Dendritic cell treated with granulocyte-macrophage colony-stimulating factor and Interleukin-4, amounts not matched to agents 40 ng/mL and 50 ng/mL, for 4 days (primary cell): ENCODE measurements at regions of chr4 and their contacts with region 1.

Region 1: DNA sequence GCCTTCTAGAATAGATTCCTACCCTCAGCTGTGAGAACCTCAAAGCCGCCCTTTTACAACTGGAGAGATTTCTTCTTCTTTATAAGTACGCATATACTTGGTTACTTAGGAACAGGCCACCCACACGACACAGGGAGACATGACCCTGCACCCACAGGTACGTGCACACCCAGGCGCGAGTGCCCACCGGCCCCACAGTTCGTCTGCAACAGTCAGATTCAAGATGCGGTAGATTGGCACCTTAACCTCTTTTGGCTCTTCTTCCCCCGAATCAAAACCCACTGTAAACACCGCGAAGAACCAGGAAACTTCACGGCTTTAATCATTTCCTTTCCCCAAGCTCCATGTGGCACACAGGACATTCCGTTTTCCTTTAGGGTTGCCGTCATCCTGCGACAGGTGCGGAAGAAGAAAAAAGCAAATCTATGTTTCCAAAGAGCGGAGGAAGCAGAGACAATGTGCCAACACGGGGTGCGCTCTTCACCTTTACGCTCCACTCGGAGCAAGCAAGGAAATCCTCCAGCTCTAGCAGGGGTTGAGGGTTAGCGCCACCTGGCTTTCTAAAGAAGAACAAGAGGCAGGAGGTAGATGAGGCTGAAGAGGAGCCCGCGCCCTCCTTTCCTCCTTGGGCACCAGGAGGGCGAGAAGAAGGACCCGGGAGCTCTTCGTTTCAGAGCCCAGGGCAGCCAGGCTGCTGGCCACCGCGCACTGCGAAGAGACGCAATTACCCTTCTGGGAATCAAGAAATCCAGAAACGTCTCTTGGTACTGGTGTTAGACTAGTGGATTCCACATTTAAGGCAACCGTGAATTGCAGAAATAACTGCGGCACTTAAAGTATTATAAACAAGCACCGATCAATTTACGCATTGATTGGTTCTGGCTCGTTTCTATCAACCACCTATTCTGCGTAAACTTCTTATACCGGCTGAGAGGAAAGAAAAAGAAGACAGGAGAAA is 35.7 kb downstream of the HAND2 start:
- H3K4me3 Mint-ChIP-seq: peak overlapping the region; percentile 71
- H3K27ac Mint-ChIP-seq: no peak overlapping the region
- H3K4me1 Mint-ChIP-seq: peaks cover 25% of the 10 kb centered on the region
- H3K27me3 Mint-ChIP-seq: peaks cover 30% of the 10 kb centered on the region

Region 2: DNA sequence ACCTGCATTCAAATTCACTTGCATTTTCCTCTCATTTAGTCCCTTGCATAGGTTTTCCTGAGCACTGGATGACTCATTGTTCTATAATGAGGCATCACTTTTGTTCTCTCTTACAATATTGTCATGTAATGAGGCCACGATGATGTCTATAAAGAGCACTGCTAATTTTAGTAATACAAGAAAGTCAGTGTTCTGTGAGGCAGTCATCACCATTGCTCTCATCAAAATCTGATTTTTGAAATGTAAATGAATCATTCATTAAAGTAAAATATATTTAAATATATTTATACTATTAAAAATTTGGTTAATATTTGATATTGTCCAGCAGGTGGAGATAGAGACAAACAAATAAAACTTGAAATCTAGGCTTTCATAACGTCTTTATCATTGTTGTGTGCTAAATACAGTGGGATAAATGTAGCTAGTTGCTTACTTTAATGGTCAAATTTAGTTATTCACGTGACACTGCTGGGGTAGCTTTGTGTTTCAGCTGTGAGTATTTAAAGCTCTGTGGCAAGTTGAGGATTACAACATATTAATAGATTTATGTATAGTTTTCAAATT is 175.6 kb before region 1 on chr4:
- intact Hi-C with region 1: loop called (anchors 5 kb)
- H3K4me3 Mint-ChIP-seq: no peak overlapping the region
- H3K27ac Mint-ChIP-seq: no peak overlapping the region
- H3K4me1 Mint-ChIP-seq: peaks cover 10% of the 10 kb centered on the region
- H3K27me3 Mint-ChIP-seq: no peaks in the 10 kb centered on the region

Region 3: GRCh38 chr4:173436771-173437265 is 57.5 kb before region 1 on chr4:
- intact Hi-C with region 1: no loop called
- H3K4me3 Mint-ChIP-seq: no peak overlapping the region
- H3K27ac Mint-ChIP-seq: no peak overlapping the region
- H3K4me1 Mint-ChIP-seq: peaks cover 16% of the 10 kb centered on the region
- H3K27me3 Mint-ChIP-seq: no peaks in the 10 kb centered on the region

Region 4: GRCh38 chr4:173450281-173450680 is 44.0 kb before region 1 on chr4:
- intact Hi-C with region 1: no loop called
- H3K4me3 Mint-ChIP-seq: no peak overlapping the region
- H3K27ac Mint-ChIP-seq: no peak overlapping the region
- H3K4me1 Mint-ChIP-seq: no peaks in the 10 kb centered on the region
- H3K27me3 Mint-ChIP-seq: no peaks in the 10 kb centered on the region

Region 5: GRCh38 chr4:173529477-173530325 is 35.4 kb after region 1 on chr4 and contains the start of gene HAND2:
- intact Hi-C with region 1: loop called (anchors 5 kb)
- H3K4me3 Mint-ChIP-seq: peak within 1 kb of the TSS; percentile 46
- H3K27ac Mint-ChIP-seq: no peak within 1 kb of the TSS
- H3K4me1 Mint-ChIP-seq: peaks cover 12% of the 10 kb centered on the region
- H3K27me3 Mint-ChIP-seq: peaks cover 91% of the 10 kb centered on the region

Region 6: DNA sequence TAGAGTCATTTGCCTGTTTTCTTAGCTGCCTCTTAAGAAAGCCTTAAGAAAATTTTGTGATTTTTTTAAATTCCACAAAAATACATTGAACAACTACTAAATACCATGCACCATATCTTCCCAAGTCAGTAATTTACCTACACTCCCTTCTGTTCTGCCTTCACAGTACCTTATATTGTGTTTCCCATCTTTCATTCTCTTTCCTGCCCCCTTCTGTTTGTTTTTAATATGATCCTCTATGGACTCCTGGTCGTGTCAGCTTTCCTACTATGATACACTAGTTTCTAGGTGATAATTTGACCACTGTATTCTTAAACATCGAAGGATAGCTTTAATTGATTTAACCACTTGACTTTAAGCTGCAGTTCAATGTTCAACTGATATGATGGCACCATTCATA is 333.4 kb after region 1 on chr4:
- intact Hi-C with region 1: no loop called
- H3K4me3 Mint-ChIP-seq: no peak overlapping the region
- H3K27ac Mint-ChIP-seq: no peak overlapping the region
- H3K4me1 Mint-ChIP-seq: no peaks in the 10 kb centered on the region
- H3K27me3 Mint-ChIP-seq: peaks cover 5% of the 10 kb centered on the region